ENCODE measurements at regions of chr4 and their contacts with region 1.

Region 1: GRCh38 chr4:158729716-158730559 is 6.7 kb upstream of the PPID start:
- DNase-seq: no peak

Region 2: GRCh38 chr4:158768555-158769174 is 38.7 kb after region 1 on chr4 and contains the start of gene FNIP2:
- intact Hi-C with region 1: loop called (anchors 5 kb)
- DNase-seq: peak; percentile 91
- total RNA-seq, gene FNIP2: 38.5 TPM

Region 3: DNA sequence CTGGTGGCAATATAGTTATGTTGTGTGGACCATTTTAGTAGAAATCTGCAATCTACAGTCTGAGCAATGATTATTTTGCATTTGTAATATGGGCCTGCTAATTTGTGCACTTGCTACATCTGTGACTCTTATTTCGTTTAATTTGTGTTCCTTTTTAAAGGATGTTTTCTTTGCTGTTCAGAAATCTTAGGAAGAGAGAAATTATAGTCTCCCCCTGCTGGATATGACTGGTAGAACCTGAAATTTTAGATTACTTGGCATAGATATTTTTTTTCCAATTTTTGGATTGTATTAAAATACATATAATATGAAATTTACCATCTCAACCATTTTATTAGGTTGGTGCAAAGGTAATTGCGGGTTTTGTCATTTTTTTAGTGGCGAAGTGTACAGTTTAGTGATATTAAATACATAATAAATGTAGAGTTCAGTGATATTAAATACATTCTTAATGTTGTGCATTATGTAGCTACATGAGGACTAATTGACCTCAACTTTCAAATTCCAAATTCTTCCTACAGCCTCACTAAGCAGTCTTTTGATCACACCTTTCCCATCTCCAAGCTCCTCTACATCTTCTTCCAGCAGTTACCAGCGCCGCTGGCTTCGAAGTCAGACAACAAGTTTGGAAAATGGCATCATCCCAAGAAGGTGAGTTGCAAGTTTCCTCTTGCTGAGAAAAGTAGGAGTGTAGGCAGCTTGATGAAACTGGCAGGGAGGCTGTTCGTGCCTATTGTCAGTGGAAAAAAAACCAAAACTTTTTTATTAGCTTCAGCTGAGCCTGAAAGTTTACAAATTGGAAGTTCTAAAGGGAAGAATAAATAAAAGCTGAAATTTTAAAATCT is 121.1 kb after region 1 on chr4:
- intact Hi-C with region 1: loop called (anchors 1 kb)
- DNase-seq: no peak

Region 4: DNA sequence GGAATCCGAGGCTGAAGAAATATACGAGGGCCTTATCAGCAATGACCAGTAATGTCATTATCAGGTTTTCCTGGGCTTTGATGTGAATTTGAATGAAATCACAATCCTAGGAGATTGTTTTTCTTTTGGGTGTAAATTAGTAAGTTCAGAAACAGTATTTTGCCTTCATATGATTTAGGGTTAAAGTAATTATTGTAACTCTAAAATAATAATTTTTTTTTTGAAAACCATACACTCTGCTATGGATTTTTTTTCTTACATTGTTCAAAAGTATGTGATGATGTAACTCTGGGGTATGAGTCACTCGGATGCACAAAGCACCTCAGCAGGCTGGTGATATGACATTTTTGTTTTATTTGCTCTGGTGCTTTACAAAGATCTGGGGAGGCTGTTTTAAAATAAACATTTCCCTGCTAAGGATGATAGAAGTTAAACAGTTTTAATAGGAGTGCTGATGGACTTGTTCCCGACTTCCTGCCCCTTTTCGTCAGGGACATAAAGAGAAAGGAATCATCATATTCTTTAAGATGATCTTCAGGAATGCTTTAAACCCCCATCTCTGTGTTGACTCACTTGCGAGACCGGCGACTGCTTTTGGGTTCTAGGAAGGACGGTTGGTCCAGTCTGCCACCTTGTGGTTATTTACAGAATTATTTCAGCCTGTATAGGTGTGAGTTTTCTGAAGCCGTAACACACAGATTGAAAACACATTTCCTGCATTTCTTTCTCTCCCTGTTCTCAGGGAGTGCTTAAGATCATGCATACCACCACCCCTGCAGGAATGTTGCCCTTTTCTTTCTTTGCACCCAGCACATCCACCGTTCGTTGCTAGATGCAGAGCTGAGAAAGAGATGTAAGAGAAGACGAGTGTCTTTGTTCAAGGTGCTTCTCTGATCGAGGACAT is 445.4 kb after region 1 on chr4:
- intact Hi-C with region 1: loop called (anchors 5 kb)
- DNase-seq: no peak

Region 5: DNA sequence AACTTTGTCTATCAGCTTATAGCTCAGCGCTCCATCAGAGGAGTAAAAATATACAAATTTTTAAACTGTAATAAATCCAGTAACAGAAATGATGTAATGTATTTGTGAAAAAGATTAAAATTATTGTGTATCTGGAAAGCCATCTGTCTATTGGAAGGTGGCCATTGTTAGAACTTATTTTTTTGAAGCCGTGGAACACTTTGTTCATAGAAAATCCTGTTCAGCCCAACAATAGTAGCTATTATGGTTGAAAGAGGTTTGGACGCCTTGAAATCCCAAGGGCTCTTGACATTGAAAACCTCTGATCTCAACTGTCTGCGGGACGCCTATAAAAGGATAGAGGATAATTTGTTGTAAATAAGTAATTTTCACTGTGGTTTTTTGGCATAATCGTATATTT is 471.2 kb after region 1 on chr4:
- intact Hi-C with region 1: loop called (anchors 5 kb)
- DNase-seq: no peak